BJ (cell line): ENCODE measurements at regions of chr20 and their contacts with region 1.

Region 1: GRCh38 chr20:50416114-50416789 is 93.9 kb upstream of the PTPN1 start:
- DNase-seq: no peak
- H3K4me3 ChIP-seq: no peak overlapping the region
- H3K27me3 ChIP-seq: no peaks in the 10 kb centered on the region
- CTCF ChIP-seq: no peak

Region 2: GRCh38 chr20:50197471-50198179 is 218.6 kb before region 1 on chr20:
- CTCF ChIA-PET with region 1: no interaction called
- POLR2A ChIA-PET with region 1: interaction called, 10 read pairs
- DNase-seq: no peak
- H3K4me3 ChIP-seq: no peak overlapping the region
- H3K27me3 ChIP-seq: no peaks in the 10 kb centered on the region
- CTCF ChIP-seq: no peak

Region 3: GRCh38 chr20:50569864-50570836 is 153.9 kb after region 1 on chr20:
- CTCF ChIA-PET with region 1: no interaction called
- POLR2A ChIA-PET with region 1: no interaction called
- DNase-seq: no peak
- H3K4me3 ChIP-seq: no peak overlapping the region
- H3K27me3 ChIP-seq: no peaks in the 10 kb centered on the region
- CTCF ChIP-seq: peak; percentile 61

Region 4: DNA sequence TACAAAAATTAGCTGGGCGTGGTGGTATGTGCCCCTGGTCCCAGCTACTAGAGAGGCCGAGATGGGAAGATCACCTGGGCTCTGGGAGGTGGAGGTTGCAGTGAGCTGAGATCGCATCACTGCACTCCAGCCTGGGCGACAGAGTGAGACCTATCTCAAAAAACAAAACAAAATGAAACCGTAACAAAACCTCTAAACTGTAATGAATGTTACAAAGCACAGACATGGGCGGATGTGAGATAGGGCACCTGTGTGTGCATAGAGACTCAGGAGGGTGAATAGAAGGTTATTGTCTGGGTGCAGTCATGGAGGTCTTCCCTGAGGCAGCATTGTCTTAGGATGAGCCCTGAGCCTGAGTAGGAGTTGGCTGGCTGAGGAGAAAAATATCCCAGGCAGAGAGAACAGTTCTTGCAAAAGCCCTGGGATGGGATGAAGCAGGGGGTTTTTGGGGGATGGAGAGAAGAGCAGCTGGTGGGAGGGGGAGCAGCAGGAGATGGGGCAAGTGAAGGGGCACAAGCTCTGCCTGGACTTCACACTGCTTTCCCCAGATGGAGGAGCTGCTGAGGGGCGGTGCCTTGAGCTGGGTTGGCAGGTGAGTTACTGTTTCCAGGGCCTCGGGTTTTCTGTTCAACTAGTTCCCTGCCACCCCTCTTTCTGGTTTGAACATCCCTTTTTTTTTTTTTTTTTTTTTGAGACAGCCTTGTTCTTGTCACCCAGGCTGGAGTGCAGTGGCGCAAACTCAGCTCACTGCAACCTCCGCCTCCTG is 383.8 kb after region 1 on chr20:
- CTCF ChIA-PET with region 1: no interaction called
- POLR2A ChIA-PET with region 1: no interaction called
- DNase-seq: no peak
- H3K4me3 ChIP-seq: no peak overlapping the region
- H3K27me3 ChIP-seq: no peaks in the 10 kb centered on the region
- CTCF ChIP-seq: no peak